ENCODE measurements at regions of chr17 and their contacts with region 1.

Region 1: GRCh38 chr17:22266231-22266630 is 573.9 kb downstream of the KCNJ18 start:
- DNase-seq: no peak
- ATAC-seq: no peak
- H3K4me3 Mint-ChIP-seq: no peak overlapping the region
- H3K27ac Mint-ChIP-seq: no peak overlapping the region
- H3K4me1 Mint-ChIP-seq: no peaks in the 10 kb centered on the region
- H3K27me3 Mint-ChIP-seq: no peaks in the 10 kb centered on the region

Region 2: DNA sequence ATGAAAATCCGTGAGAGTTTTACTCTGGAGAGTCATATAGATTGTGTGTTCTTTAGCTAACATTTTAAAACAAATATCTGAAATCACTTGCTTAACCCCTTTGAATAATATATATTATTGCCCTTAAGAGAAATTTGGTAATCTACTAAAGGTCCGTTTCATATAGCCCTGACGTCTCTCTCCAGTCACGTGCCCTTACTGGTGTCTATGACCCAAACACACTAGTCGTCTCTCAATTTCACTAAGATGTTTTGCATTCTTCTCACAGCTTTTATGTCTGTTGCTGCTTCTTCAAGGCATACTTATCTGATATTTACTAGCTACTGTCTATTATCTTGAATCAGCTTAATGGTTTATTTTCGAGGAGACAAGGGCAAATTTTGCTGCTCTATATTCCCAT is 164.1 kb before region 1 on chr17:
- CTCF ChIA-PET with region 1: no interaction called
- POLR2A ChIA-PET with region 1: no interaction called
- intact Hi-C with region 1: loop called in 1 of 2 experiments (anchors 10 kb)
- DNase-seq: no peak
- ATAC-seq: no peak
- H3K4me3 Mint-ChIP-seq: no peak overlapping the region
- H3K27ac Mint-ChIP-seq: no peak overlapping the region
- H3K4me1 Mint-ChIP-seq: no peaks in the 10 kb centered on the region
- H3K27me3 Mint-ChIP-seq: no peaks in the 10 kb centered on the region

Region 3: GRCh38 chr17:22300731-22301352 is 34.6 kb after region 1 on chr17:
- CTCF ChIA-PET with region 1: no interaction called
- POLR2A ChIA-PET with region 1: no interaction called
- intact Hi-C with region 1: loop called in 1 of 2 experiments (anchors 5 kb)
- DNase-seq: no peak
- ATAC-seq: no peak
- H3K4me3 Mint-ChIP-seq: no peak overlapping the region
- H3K27ac Mint-ChIP-seq: no peak overlapping the region
- H3K4me1 Mint-ChIP-seq: no peaks in the 10 kb centered on the region
- H3K27me3 Mint-ChIP-seq: no peaks in the 10 kb centered on the region